Ascending aorta (tissue), 2 donors: ENCODE measurements at regions of chr22 and their contacts with region 1.

Region 1: GRCh38 chr22:23256986-23257888 is 76.9 kb downstream of the BCR start:
- DNase-seq: peak; percentile 39 to 92
- H3K4me3 ChIP-seq: no peak overlapping the region
- H3K27ac ChIP-seq: peak overlapping the region; percentile 82 to 90
- H3K4me1 ChIP-seq: peaks cover 12 to 35% of the 10 kb centered on the region in 2 donors
- H3K27me3 ChIP-seq: no peaks in the 10 kb centered on the region
- CTCF ChIP-seq: no peak

Region 2: DNA sequence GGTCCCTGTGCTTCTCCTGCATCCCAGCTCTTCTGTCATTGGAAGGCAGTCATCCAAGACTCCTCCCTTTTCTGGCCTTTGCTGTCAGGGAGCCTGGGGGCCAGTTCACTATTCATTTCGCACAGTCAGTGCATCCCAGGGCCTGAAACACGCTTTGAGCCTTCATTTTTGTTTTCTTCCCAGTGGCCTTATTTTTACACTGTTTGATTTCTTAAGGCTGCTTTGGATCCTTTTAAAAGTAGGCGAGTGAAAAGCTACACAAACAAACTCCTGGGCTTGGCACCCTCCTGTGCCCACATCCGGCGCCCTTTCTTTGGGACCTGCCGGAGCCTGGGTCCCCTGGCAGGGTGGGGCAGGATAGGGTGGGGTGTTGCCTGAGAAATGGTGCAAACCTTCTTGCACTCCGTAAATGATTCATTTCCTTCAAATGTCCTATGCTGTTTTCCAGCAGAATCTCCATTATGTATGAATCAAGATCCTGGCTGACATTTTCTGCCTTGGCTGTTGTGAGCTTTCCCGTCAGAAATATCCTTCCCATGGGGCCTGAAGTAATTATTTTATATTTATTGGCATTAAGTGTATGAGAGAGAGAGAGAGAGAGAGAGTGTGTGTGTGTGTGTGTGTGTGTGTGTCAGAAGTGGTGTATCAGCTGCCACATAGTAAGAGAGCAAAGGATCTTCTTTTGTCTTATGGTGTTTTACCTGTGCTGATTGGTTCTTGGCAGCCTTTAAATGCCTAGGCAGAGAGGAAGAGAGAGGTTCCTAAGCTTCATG is 31.3 kb before region 1 on chr22:
- intact Hi-C with region 1: loop called (anchors 2 kb)
- DNase-seq: peak in 1 of 2 donors; percentile 93
- H3K4me3 ChIP-seq: peak overlapping the region in 1 of 2 donors; percentile 9
- H3K27ac ChIP-seq: peak overlapping the region; percentile 85 to 88
- H3K4me1 ChIP-seq: peaks cover 7 to 55% of the 10 kb centered on the region in 2 donors
- H3K27me3 ChIP-seq: no peaks in the 10 kb centered on the region
- CTCF ChIP-seq: no peak